ENCODE measurements at regions of chr2 and their contacts with region 1.

Region 1: GRCh38 chr2:36918307-36918706 is 48.0 kb downstream of the STRN start:
- DNase-seq: no peak
- H3K4me3 Mint-ChIP-seq: no peak overlapping the region
- H3K27ac Mint-ChIP-seq: no peak overlapping the region
- H3K4me1 Mint-ChIP-seq: peaks cover 21% of the 10 kb centered on the region
- H3K27me3 Mint-ChIP-seq: no peaks in the 10 kb centered on the region
- CTCF ChIP-seq: no peak

Region 2: DNA sequence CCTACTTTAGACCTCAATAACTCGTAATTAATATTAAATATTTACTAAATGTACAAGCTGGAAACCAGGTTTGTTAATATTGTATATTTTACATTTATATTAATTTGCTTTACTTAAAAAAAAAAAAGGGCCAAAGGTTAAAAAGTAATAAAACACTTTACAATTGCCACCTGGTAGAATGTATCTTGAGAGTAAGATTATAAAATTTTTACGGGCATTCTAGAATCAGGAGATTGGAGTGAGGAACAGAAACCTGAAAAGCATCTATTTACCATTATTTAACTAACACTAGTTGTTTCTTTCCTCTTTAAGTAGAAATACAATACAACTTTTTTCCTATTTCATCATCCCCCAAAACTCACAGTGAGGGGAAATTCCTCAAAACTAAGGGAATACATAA is 63.6 kb after region 1 on chr2:
- CTCF ChIA-PET with region 1: no interaction called
- intact Hi-C with region 1: no loop called
- DNase-seq: no peak
- H3K4me3 Mint-ChIP-seq: no peak overlapping the region
- H3K27ac Mint-ChIP-seq: no peak overlapping the region
- H3K4me1 Mint-ChIP-seq: no peaks in the 10 kb centered on the region
- H3K27me3 Mint-ChIP-seq: no peaks in the 10 kb centered on the region
- CTCF ChIP-seq: no peak

Region 3: DNA sequence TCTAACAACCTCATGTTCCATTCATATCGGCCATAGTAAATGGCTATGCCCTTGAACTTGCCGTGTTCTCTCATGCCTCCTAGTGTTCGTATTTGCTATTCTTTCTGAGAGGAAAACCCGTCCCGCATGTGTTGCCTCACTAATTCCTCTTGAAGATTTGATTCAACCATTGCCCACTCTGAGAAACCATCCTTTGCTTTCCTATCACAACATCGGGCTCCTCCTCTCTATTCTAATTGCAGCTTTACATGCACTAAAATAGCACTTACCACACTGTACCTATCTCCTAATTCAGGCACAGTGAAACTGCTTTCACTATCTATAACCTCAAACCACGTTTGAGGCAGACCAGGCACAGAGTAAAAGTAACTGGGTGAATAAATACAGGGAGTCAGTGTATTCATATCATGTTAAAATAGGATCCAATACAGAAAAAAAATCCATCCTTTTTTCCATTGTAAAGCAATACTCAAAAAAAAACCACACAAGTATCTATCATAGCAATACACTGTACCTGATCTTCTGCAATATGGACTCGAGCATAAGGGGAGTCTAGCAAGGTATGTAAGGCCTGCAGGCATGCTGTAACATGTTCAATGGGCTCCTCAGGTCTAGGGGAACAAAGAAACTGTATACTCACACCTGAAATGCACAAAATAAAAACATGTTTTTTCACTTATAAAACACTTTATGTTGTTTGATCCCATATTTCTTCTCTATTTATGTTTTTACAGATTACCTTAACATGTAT is 87.0 kb after region 1 on chr2:
- CTCF ChIA-PET with region 1: no interaction called
- intact Hi-C with region 1: loop called (anchors 10 kb)
- DNase-seq: peak; percentile 11
- H3K4me3 Mint-ChIP-seq: no peak overlapping the region
- H3K27ac Mint-ChIP-seq: no peak overlapping the region
- H3K4me1 Mint-ChIP-seq: no peaks in the 10 kb centered on the region
- H3K27me3 Mint-ChIP-seq: no peaks in the 10 kb centered on the region
- CTCF ChIP-seq: peak; percentile 69